K562 (cell line): ENCODE measurements at regions of chr4 and their contacts with region 1.

Region 1: DNA sequence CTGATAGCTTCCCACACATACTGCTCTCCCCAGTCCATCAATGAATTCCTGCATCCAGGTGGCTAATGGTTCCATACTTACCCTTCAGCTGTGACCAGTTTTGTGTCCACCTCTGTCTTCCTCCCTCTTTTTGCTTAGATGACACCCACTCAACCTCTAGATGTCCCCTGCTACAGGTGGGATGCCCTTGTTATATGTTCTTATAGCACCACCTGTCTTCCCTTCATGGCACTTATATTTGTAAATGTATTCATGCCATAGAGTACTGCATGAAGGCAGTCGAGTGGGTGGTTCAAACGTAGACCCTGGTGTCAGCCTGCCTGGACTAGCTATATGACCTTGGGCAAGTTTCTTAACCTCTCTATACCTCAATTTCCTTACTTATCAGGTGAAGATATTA is 6.5 kb upstream of the USP46 start:
- DNase-seq: no peak
- ATAC-seq: peak; percentile 57
- H3K4me3 ChIP-seq: no peak overlapping the region
- H3K27ac ChIP-seq: no peak overlapping the region
- H3K4me1 ChIP-seq: peaks cover 0 to under 1% of the 10 kb centered on the region in 2 experiments; a peak in 2 of 5 replicates
- H3K27me3 ChIP-seq: 0 out of 5 replicates have a peak, but pooled peaks cover 0 to 2% of the 10 kb centered on the region in 2 experiments
- CTCF ChIP-seq: peak; percentile 22 to 42 (median 41); a peak in 2 of 6 replicates
- EP300 ChIP-seq: no peak
- POLR2A ChIP-seq: no peak
- RAD21 ChIP-seq: peak in 1 of 2 experiments; percentile 34; a peak in 2 of 4 replicates

Region 2: GRCh38 chr4:52172166-52172565 is 493.4 kb before region 1 on chr4:
- CTCF ChIA-PET with region 1: no interaction called
- POLR2A ChIA-PET with region 1: no interaction called
- in situ Hi-C with region 1: no loop called
- intact Hi-C with region 1: no loop called
- DNase-seq: peak in 1 of 4 experiments; percentile 3
- ATAC-seq: no peak
- H3K4me3 ChIP-seq: no peak overlapping the region
- H3K27ac ChIP-seq: no peak overlapping the region
- H3K4me1 ChIP-seq: no peaks in the 10 kb centered on the region
- H3K27me3 ChIP-seq: no peaks in the 10 kb centered on the region
- CTCF ChIP-seq: peak in 2 of 3 experiments; percentile 12 to 21; a peak in 1 of 6 replicates
- EP300 ChIP-seq: no peak
- POLR2A ChIP-seq: no peak
- RAD21 ChIP-seq: no peak

Region 3: GRCh38 chr4:52376132-52376704 is 289.4 kb before region 1 on chr4:
- CTCF ChIA-PET with region 1: interaction called, 10 read pairs
- POLR2A ChIA-PET with region 1: no interaction called
- in situ Hi-C with region 1: no loop called
- intact Hi-C with region 1: loop called (anchors 5 kb)
- DNase-seq: peak; percentile 23 to 57 (median 32)
- ATAC-seq: no peak
- H3K4me3 ChIP-seq: no peak overlapping the region
- H3K27ac ChIP-seq: no peak overlapping the region
- H3K4me1 ChIP-seq: no peaks in the 10 kb centered on the region
- H3K27me3 ChIP-seq: no peaks in the 10 kb centered on the region; a peak in 2 of 5 replicates
- CTCF ChIP-seq: peak; percentile 31 to 66 (median 57); a peak in 5 of 6 replicates
- EP300 ChIP-seq: no peak
- POLR2A ChIP-seq: no peak
- RAD21 ChIP-seq: peak; percentile 60 to 66

Region 4: GRCh38 chr4:52545099-52546069 is 120.2 kb before region 1 on chr4:
- CTCF ChIA-PET with region 1: no interaction called
- POLR2A ChIA-PET with region 1: no interaction called
- in situ Hi-C with region 1: loop called (anchors 10 kb)
- intact Hi-C with region 1: loop called (anchors 5 kb)
- DNase-seq: peak; percentile 74 to 77 (median 76)
- ATAC-seq: peak; percentile 98
- H3K4me3 ChIP-seq: no peak overlapping the region
- H3K27ac ChIP-seq: no peak overlapping the region
- H3K4me1 ChIP-seq: no peaks in the 10 kb centered on the region; a peak in 1 of 5 replicates
- H3K27me3 ChIP-seq: peaks cover 2 to 4% of the 10 kb centered on the region in 2 experiments; a peak in 1 of 5 replicates
- CTCF ChIP-seq: peak; percentile 84 to 94 (median 92)
- EP300 ChIP-seq: no peak
- POLR2A ChIP-seq: no peak
- RAD21 ChIP-seq: peak; percentile 90 to 95